ENCODE measurements at regions of chr6 and their contacts with region 1.

Region 1: GRCh38 chr6:2988426-2989331 is 11.0 kb upstream of the NQO2 start:
- DNase-seq: peak; percentile 74
- H3K4me3 Mint-ChIP-seq: peak overlapping the region; percentile 93
- H3K27ac Mint-ChIP-seq: peak overlapping the region; percentile 97
- H3K4me1 Mint-ChIP-seq: peaks cover 21% of the 10 kb centered on the region
- H3K27me3 Mint-ChIP-seq: peaks cover 3% of the 10 kb centered on the region

Region 2: GRCh38 chr6:2791124-2791974 is 197.3 kb before region 1 on chr6:
- intact Hi-C with region 1: loop called (anchors 1 kb)
- DNase-seq: peak; percentile 55
- H3K4me3 Mint-ChIP-seq: peak overlapping the region; percentile 41
- H3K27ac Mint-ChIP-seq: peak overlapping the region; percentile 87
- H3K4me1 Mint-ChIP-seq: peaks cover 44% of the 10 kb centered on the region
- H3K27me3 Mint-ChIP-seq: no peaks in the 10 kb centered on the region

Region 3: GRCh38 chr6:2848851-2849250 is 139.8 kb before region 1 on chr6:
- intact Hi-C with region 1: loop called (anchors 1 kb)
- DNase-seq: peak; percentile 64
- H3K4me3 Mint-ChIP-seq: peak overlapping the region; percentile 51
- H3K27ac Mint-ChIP-seq: peak overlapping the region; percentile 73
- H3K4me1 Mint-ChIP-seq: peaks cover 50% of the 10 kb centered on the region
- H3K27me3 Mint-ChIP-seq: no peaks in the 10 kb centered on the region

Region 4: GRCh38 chr6:2940010-2940850 is 48.4 kb before region 1 on chr6:
- intact Hi-C with region 1: loop called (anchors 1 kb)
- DNase-seq: peak; percentile 76
- H3K4me3 Mint-ChIP-seq: no peak overlapping the region
- H3K27ac Mint-ChIP-seq: peak overlapping the region; percentile 92
- H3K4me1 Mint-ChIP-seq: peaks cover 48% of the 10 kb centered on the region
- H3K27me3 Mint-ChIP-seq: no peaks in the 10 kb centered on the region

Region 5: DNA sequence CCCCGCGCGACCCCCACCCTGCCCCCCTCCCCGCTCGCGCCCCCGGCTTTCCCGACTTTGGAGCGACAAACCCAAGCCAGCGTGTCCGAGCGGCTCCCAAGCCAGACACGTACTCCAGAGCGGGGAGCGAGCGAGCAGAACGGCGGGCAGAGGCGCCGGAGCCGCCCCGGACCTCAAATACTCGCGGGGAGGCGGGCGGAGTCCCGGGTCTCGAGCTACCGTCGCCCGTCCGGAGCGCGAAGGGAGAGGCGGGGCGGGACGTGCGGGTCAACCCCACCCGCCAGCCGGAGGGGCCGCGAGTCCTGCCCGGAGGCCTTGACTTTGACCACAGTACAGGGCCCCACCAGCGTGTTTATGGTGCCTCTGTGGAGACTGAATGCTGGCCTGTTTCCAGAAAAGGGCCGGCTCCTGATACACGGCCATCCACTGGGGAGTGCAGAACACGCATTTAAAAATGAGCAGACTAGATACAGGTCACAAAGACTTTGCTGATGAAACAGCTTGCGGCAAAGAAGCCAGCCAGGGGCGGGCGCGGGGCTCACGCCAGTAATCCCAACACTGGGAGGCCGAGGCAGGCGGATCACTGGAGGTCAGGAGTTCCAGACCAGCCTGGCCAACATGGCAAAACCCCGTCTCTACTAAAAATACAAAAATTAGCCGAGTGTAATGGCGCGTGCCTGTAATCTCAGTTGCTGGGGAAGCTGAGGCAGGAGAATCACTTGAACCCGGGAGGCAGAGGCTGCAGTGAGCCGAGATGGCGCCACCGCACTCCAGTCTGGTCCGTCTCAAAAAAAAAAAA is 17.1 kb before region 1 on chr6 and contains the start of gene SERPINB6:
- intact Hi-C with region 1: loop called (anchors 2 kb)
- DNase-seq: peak; percentile 22
- H3K4me3 Mint-ChIP-seq: peak within 1 kb of the TSS; percentile 83
- H3K27ac Mint-ChIP-seq: peak within 1 kb of the TSS; percentile 81
- H3K4me1 Mint-ChIP-seq: peaks cover 42% of the 10 kb centered on the region
- H3K27me3 Mint-ChIP-seq: peaks cover 11% of the 10 kb centered on the region
- total RNA-seq, gene SERPINB6: 72.0 and 73.0 TPM in 2 replicates

Region 6: DNA sequence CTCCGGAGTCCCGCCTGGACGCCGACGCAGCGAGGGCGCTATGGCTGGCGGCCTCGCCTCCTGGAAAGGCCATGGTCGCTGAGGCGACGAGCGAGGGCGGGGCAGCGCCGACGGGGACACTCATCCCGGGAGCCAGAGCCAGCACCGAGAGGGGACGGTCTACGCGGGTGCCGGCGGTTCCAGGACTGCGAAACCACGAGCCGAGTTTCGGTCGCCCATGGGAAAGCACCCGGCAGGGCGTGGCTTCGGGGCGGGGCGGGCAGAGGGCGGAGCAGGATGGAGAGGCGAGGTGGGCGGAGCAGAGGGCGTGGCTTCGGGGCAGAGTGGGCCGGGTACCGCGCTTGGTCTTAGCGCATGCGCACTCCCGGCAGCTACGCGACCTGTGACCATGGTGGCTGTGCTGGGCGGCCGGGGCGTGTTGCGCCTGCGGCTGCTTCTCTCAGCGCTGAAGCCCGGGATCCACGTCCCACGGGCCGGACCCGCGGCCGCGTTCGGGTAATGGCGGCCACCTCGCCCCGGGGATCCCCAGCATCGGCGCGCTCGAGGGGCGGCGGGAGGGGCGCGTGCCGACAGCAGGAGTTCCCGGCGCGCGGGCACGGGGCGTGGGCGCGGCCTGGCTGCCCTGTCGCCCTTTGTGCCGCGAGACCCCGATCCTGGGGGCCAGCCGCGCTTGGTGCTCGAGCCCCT is 129.8 kb after region 1 on chr6 and contains the start of gene BPHL:
- intact Hi-C with region 1: loop called (anchors 1 kb)
- DNase-seq: peak; percentile 98
- H3K4me3 Mint-ChIP-seq: peak within 1 kb of the TSS; percentile 80
- H3K27ac Mint-ChIP-seq: peak within 1 kb of the TSS; percentile 81
- H3K4me1 Mint-ChIP-seq: peaks cover 16% of the 10 kb centered on the region
- H3K27me3 Mint-ChIP-seq: no peaks in the 10 kb centered on the region
- total RNA-seq, gene BPHL: 12.1 and 15.8 TPM in 2 replicates